PC-9 (cell line): ENCODE measurements at regions of chr20 and their contacts with region 1.

Region 1: DNA sequence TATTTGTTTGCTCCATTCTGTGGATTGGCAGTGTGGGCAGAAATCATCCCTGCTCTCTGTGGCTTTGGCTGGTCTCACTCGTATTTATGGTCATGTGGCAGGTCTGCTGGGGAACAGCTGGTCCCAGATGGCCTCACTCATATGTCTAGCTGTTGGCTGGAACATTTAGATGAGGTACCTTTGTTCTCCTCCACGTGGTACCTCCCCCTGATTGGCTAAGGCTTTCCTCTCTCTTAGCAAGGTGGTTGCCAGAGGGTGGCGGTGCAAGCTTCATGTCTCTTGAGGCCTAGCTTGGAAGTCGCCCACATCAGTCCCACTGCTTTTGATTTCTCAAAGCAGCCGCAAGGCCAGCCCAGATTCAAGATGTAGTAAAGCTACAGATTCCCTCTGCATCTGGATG is 348.5 kb upstream of the BTBD3 start:
- DNase-seq: no peak
- H3K4me3 ChIP-seq: no peak overlapping the region
- H3K27ac ChIP-seq: no peak overlapping the region
- H3K4me1 ChIP-seq: no peaks in the 10 kb centered on the region
- H3K27me3 ChIP-seq: no peaks in the 10 kb centered on the region
- CTCF ChIP-seq: no peak

Region 2: GRCh38 chr20:10902576-10903282 is 666.4 kb before region 1 on chr20:
- CTCF ChIA-PET with region 1: no interaction called
- POLR2A ChIA-PET with region 1: no interaction called
- intact Hi-C with region 1: no loop called
- DNase-seq: no peak
- H3K4me3 ChIP-seq: no peak overlapping the region
- H3K27ac ChIP-seq: no peak overlapping the region
- H3K4me1 ChIP-seq: no peaks in the 10 kb centered on the region
- H3K27me3 ChIP-seq: no peaks in the 10 kb centered on the region
- CTCF ChIP-seq: no peak

Region 3: DNA sequence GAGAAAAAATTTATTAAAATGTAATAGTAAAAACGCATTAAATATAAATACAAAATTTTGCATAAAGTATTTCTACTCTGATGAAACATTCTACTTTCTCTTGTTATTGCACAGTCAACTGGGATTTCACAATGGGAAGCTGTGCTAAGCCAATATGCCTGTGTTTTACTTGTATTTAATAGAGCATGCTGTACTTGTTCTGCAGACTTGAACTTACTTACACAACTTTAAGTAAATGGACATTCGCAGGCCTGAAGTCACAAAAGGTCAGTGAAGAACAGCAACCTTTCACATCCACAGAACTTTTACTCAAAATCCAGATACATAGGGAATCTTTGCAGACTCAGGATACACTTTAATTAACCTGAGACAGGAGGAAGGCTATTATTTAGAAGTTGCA is 758.0 kb after region 1 on chr20:
- CTCF ChIA-PET with region 1: no interaction called
- POLR2A ChIA-PET with region 1: interaction called, 17 read pairs
- intact Hi-C with region 1: no loop called
- DNase-seq: no peak
- H3K4me3 ChIP-seq: no peak overlapping the region
- H3K27ac ChIP-seq: no peak overlapping the region
- H3K4me1 ChIP-seq: no peaks in the 10 kb centered on the region
- H3K27me3 ChIP-seq: no peaks in the 10 kb centered on the region
- CTCF ChIP-seq: no peak